ENCODE measurements at regions of chr19 and their contacts with region 1.

Region 1: DNA sequence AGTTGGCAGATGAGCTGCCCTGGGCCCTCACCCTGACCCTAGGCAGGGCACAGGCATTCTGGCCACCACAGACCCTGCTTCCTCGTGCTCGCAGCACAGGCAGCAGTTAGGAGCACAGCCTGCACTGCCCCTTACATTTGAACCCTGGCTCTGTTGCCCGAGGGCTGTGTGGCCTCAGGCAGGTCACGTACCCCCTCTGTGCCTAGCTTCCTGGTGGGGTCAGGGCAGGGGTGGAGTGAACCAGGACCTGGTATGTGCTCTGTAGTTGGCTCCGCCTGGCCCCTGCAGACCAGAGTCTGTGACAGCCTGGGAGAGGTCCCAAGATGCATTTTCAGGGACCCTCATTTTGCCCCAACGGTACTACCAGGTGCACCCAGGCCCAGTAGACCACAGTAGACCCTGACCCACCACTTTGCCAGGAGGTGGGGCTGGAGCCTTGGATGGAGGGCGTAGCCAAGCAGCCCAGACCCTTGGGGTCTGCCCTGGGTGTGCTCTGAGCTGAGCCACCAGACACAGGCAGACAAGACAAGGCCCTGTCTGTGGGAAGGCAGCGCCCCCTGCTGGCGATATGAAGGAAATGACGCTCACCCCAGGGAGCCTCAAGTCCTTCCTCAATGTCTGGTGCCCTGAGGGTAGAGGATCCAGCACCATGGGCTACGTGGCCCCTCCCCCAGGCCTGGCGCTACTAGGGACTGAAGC is 9.1 kb downstream of the LYL1 start:
- DNase-seq: peak; percentile 90 to 93
- ATAC-seq: peak; percentile 73
- H3K4me3 ChIP-seq: no peak overlapping the region
- H3K27ac ChIP-seq: peak overlapping the region; percentile 49 to 59
- H3K4me1 ChIP-seq: peaks cover 0 to 3% of the 10 kb centered on the region in 2 donors
- H3K27me3 ChIP-seq: no peaks in the 10 kb centered on the region

Region 2: DNA sequence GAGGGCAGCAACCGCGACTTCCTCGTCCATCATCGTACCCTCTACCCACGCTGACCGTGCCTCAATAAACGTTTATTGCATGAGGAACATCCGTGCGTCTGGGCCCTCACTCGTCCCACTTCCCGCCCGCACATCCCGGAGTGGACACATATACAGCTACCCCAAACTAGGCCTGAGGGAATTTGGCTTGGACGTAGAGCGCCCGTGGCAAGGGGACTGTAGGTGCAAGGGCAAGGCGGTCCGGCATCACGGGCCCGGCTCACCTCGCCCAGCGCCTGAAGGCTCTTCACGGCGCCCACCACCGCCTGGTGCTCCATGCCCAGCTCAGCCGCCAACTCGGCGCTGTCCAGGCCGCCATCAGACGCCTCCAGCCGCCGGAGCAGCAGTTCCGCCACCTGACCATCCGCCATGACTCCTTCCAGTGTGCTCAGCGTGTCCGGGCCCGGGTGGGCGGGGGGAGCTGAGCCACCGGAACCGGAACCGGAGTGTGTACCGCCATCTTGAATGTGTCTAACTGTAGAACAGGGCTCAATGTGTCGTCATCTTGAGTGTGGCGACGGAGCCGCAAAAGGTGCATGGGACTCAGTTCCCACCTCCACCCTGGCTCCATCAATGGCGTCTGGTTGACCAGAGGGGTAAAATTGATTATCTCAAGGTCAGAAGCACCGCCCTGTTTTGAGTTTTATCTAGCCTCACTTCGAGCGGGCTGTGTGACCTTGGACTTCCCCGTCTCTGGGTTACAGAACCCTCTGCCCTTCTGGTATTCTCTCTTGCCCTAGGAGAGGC is 160.1 kb before region 1 on chr19 and contains the start of gene FARSA:
- intact Hi-C with region 1: no loop called
- DNase-seq: peak; percentile 95 to 96
- ATAC-seq: peak; percentile 85
- H3K4me3 ChIP-seq: peak within 1 kb of the TSS; percentile 14 to 80
- H3K27ac ChIP-seq: peak within 1 kb of the TSS in 1 of 2 donors; percentile 1
- H3K4me1 ChIP-seq: no peaks in the 10 kb centered on the region
- H3K27me3 ChIP-seq: no peaks in the 10 kb centered on the region
- total RNA-seq, gene FARSA: 27.2 to 31.4 TPM

Region 3: DNA sequence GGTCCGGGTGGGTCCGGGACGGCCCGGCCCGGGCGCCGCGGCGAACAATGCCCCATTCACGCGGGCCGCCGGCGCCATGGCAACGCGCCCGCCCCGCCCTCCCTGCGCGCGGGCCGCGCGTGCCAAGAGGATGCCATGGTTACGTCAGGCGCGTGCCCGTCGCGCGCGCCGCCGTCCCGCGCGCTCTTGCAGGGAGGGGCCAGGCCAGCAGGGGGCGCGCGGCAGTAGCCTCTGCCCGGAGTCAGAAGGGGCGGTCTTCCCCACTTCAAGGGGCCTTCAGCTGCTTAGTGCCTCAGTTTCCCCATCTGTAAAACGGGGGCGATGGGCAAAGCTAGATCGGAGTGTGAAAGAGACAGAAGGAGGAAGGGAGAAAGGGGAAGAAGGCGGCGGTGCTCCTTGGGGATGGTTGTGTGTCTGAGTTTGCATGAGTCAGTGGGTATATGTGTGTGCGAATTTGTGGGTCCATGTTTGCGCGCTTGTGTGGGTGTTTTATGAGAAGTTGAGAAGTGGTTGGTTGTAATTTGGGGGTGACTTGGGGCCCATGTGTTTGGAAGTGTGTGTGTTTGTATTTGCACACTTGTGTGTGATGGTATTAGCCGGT is 109.9 kb before region 1 on chr19:
- intact Hi-C with region 1: loop called (anchors 1 to 2 kb)
- DNase-seq: peak; percentile 81 to 93
- ATAC-seq: peak; percentile 93
- H3K4me3 ChIP-seq: no peak overlapping the region
- H3K27ac ChIP-seq: no peak overlapping the region
- H3K4me1 ChIP-seq: no peaks in the 10 kb centered on the region
- H3K27me3 ChIP-seq: no peaks in the 10 kb centered on the region